ENCODE measurements at regions of chr2 and their contacts with region 1.

Region 1: GRCh38 chr2:206693399-206694137 is 24.6 kb downstream of the DYTN start:
- DNase-seq: no peak

Region 2: DNA sequence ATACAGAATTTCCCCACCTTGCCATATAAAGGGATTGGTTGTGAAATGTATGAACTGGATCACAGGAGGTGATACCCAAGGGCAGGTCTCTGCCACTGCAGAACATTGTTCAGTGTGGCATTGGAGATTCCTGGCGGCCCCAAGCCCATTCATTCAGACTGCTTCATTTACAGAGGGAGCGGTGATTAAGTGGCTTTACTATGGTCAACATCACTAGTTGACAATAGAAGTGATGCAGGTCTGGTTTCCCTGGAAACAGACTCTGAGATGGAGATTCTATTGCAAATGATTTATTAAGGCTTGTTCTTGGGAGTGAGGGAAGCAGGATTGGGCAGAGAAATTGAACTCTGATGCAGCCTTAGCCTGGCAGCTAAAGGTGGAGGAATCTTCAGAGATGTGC is 356.7 kb before region 1 on chr2:
- intact Hi-C with region 1: no loop called
- DNase-seq: no peak

Region 3: DNA sequence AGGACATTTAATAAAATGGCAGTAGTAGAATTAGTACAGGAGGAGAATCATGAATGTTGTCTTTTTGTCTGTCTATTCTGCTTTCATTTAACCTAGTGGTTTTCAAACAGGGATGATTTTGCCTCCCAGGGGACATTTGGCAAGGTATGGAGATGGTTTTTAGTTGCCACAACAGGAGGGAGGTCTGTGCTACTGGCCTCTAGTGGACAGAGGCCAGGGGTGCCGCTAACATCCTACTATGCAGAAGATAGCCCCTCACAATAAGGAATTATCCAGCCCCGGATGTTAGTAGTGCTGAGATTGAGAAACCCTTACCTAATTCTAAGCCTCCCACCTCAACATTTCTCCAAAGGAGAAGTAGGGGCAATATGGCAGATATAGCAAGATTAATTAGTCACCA is 90.2 kb after region 1 on chr2:
- intact Hi-C with region 1: loop called in 1 of 2 experiments (anchors 10 kb)
- DNase-seq: no peak

Region 4: DNA sequence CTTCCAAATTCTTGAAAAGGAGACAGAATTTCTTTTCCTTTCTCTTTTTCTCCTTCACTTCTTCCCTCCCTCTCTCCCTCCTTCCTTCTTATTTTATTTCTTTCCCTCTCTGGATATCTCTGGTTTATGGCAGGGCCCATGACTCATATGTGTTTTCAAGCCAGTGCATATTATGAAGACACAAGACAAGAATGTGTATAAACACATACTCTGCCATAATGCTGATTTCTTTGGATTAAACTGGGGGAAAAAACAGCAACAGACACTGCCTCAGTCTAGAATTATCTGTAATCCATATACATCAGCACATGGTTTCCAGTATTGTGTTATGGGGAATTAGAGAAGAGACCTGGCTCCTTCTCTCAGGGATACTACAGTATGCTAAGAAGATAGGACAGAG is 162.9 kb after region 1 on chr2:
- intact Hi-C with region 1: no loop called
- DNase-seq: no peak

Region 5: DNA sequence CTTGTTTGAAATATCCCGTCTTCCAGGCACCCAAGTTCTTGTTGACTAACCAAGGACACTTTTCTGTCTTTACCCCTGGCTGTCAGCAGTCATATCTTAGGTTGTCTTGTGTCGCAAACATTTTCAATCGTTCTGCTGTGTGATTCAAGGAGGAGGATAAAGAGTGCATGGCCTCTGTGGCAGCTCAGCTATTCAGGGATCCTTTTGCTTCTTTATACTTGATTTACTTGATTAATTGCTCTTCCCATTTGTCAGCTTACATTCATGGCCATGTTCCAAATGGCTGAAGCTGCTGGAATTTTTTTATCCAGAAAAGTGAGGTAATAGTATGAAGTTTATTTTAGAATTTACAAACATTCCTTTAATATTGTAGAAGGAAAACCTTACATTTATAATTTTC is 1173.5 kb after region 1 on chr2:
- intact Hi-C with region 1: loop called in 1 of 2 experiments (anchors 5 kb)
- DNase-seq: no peak

Measured in posterior vena cava (tissue), 2 donors.